ENCODE measurements at regions of chr6 and their contacts with region 1.

Region 1: GRCh38 chr6:152432758-152433157 is 204.4 kb downstream of the SYNE1 start:
- DNase-seq: no peak
- ATAC-seq: no peak
- H3K4me3 ChIP-seq: no peak overlapping the region
- H3K27ac ChIP-seq: no peak overlapping the region
- H3K4me1 ChIP-seq: no peaks in the 10 kb centered on the region
- H3K27me3 ChIP-seq: no peaks in the 10 kb centered on the region
- CTCF ChIP-seq: no peak

Region 2: DNA sequence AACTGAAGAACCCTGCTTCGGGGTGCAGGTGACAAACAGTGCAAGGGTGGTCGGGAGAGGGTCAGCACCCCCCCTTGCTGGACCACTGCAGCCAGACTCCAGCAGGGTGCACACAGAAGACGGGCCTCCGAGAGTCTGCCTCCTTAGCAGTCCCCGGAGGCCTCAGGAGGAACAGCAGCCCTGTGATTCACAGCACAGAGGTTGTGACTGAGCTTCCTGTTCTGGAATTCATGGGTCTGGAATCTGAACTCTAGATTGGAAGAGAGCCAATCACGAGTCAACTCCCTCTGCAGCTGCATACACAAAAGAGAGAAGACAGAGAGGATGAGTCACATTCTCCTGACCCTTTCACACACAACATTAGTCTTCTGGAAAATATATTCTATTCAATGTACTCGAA is 1357.3 kb after region 1 on chr6:
- intact Hi-C with region 1: loop called in 1 of 2 experiments (anchors 10 kb)
- DNase-seq: no peak
- ATAC-seq: no peak
- H3K4me3 ChIP-seq: no peak overlapping the region
- H3K27ac ChIP-seq: no peak overlapping the region
- H3K4me1 ChIP-seq: no peaks in the 10 kb centered on the region
- H3K27me3 ChIP-seq: no peaks in the 10 kb centered on the region
- CTCF ChIP-seq: no peak